ENCODE measurements at regions of chr7 and their contacts with region 1.

Region 1: DNA sequence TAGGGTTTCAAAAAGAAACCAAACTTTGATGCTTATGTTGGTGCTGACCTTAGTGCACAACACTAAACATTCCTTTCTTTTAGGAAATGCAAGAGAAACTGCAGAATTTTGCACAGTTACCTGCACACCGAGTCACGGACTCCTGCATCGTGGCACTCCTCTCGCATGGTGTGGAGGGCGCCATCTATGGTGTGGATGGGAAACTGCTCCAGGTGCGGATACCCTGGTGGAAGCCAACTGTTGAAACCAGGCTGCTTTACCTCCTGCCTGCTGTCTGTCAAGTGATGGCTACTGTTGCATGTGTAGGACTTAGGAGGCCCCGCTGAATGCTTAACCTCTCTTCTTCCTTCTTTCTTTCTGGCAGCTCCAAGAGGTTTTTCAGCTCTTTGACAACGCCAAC is 11.7 kb downstream of the CASP2 start:
- DNase-seq: peak; percentile 71
- ATAC-seq: peak; percentile 87
- H3K4me3 Mint-ChIP-seq: no peak overlapping the region
- H3K27ac Mint-ChIP-seq: no peak overlapping the region
- H3K4me1 Mint-ChIP-seq: peaks cover 52% of the 10 kb centered on the region
- H3K27me3 Mint-ChIP-seq: no peaks in the 10 kb centered on the region

Region 2: DNA sequence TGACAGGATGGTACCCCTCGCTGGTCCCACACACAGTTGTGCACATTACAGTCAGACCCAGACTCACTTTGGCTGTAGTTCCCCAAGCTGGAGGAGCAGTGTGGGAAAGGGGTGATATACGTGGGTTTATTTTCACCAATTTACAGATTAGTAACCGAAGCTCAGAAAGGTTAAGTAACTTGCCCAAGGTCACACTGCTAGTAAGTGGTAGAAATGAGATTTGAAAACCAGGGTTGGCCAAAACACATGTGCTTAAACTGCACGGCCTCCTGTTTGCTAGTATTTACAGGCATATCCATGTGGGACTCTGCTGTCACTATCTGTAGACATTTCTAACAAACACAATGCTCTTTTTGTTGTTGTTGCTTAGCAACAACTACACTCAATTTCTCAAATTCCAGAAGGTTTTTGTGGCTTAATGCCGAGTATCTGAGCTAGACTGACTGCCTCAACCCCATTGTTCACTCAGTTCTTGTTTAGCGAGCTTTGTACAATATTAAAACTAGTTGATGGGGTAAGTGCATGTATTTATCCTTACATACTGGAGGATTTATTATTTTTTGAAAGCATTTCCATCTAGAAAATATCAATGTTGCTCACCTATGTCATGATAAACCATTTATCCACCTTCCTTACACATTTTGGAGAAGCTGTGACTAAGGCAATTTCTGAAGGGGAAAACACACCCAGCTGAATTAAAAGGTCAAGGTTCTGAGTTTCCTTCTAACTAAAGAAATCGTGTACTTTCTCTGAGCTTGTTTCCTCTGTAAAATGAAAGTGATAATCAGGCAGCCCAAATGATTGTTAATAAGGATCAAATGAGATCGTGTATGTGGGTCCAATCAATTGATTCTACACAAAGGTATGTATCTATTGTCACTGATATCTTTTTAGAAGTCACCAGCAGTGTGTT is 20.4 kb before region 1 on chr7:
- CTCF ChIA-PET with region 1: interaction called, 31 read pairs
- POLR2A ChIA-PET with region 1: interaction called, 5 read pairs
- DNase-seq: no peak
- ATAC-seq: peak; percentile 78
- H3K4me3 Mint-ChIP-seq: peak overlapping the region; percentile 61
- H3K27ac Mint-ChIP-seq: peak overlapping the region; percentile 75
- H3K4me1 Mint-ChIP-seq: peaks cover 42% of the 10 kb centered on the region
- H3K27me3 Mint-ChIP-seq: no peaks in the 10 kb centered on the region

Region 3: DNA sequence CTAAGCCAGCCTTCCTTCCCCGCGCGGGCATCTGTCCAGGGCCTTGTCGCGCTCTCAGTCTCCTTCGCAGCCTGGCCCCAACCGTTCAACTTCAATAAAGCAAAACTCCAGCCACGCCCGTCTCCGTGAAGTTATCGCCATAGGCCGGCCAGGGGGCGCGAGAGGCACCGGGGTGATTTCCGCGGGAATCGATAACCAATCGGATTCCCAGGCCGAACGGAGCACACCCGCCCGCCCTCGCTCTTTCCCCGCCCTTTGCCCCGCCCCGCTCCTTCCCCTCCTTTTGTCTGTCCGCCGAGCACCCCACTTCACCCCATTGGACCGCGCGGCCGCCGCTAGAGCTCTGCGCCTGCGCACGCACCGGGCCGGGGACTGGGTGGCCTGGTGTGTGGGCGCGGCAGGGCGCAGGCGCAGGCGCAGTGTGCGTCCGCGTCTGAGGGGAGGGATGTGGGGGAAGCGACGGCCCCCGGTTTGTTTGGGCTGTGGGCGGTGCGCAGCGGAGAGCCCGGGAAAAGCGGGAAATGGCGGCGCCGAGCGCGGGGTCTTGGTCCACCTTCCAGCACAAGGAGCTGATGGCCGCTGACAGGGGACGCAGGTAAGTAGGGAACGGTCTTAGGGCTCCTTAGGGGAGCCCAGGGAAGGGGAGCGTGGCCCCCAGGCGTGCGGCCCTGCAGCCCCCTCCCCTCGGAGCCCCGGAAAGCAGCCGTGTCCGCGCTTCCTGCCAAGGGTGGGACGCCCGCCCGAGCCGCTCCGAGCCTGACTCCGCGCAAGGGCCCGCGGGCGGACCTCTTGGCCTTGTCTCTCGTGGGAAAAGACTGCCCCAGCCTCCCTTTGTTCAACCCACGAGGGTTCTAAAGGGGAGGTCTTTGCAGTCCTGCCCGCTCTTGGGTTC is 11.7 kb before region 1 on chr7 and contains the start of gene CASP2:
- CTCF ChIA-PET with region 1: interaction called, 25 read pairs
- POLR2A ChIA-PET with region 1: interaction called, 7 read pairs
- DNase-seq: peak; percentile 99
- ATAC-seq: peak; percentile 97
- H3K4me3 Mint-ChIP-seq: peak within 1 kb of the TSS; percentile 93
- H3K27ac Mint-ChIP-seq: peak within 1 kb of the TSS; percentile 94
- H3K4me1 Mint-ChIP-seq: peaks cover 55% of the 10 kb centered on the region
- H3K27me3 Mint-ChIP-seq: no peaks in the 10 kb centered on the region
- total RNA-seq, gene CASP2: 111 to 115 TPM

Region 4: DNA sequence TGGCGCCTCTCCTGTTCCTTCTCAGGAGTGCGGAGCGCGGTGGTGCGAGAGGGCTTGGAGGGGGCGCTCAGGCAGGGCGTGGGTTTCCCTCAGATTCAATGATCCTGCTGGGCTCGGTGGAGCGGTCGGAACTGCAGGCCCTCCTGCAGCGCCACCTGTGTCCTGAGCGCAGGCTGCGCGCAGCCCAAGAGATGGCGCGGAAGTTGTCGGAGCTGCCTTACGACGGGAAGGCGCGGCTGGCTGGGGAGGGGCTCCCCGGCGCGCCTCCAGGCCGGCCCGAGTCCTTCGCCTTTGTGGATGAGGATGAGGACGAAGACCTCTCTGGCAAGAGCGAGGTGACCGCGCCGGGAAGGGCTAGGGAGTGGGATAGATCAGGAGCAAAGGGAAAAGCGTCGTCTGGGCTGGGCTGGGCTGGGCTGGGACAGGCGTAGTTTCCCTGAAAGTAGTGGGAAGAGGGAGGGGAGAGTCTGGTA is 45.6 kb after region 1 on chr7:
- CTCF ChIA-PET with region 1: interaction called, 12 read pairs
- POLR2A ChIA-PET with region 1: no interaction called
- DNase-seq: peak; percentile 76
- ATAC-seq: peak; percentile 100
- H3K4me3 Mint-ChIP-seq: peak overlapping the region; percentile 65
- H3K27ac Mint-ChIP-seq: peak overlapping the region; percentile 53
- H3K4me1 Mint-ChIP-seq: peaks cover 9% of the 10 kb centered on the region
- H3K27me3 Mint-ChIP-seq: peaks cover 36% of the 10 kb centered on the region